Activated naive CD8-positive, alpha-beta T cell treated with anti-CD3 and anti-CD28 coated beads, Interleukin-2, amount 10 ng/mL, durations not matched to agents 7 days and 5 days (primary cell): ENCODE measurements at regions of chr6 and their contacts with region 1.

Region 1: GRCh38 chr6:34671801-34672656 is 24.5 kb downstream of the ILRUN start:
- DNase-seq: peak; percentile 59
- ATAC-seq: peak; percentile 99
- H3K4me3 Mint-ChIP-seq: peak overlapping the region; percentile 72
- H3K27ac Mint-ChIP-seq: peak overlapping the region; percentile 92
- H3K4me1 Mint-ChIP-seq: peaks cover 34% of the 10 kb centered on the region
- H3K27me3 Mint-ChIP-seq: no peaks in the 10 kb centered on the region

Region 2: GRCh38 chr6:32989396-32989795 is 1682.6 kb before region 1 on chr6:
- POLR2A ChIA-PET with region 1: no interaction called
- DNase-seq: no peak
- ATAC-seq: no peak
- H3K4me3 Mint-ChIP-seq: no peak overlapping the region
- H3K27ac Mint-ChIP-seq: no peak overlapping the region
- H3K4me1 Mint-ChIP-seq: peaks cover 19% of the 10 kb centered on the region
- H3K27me3 Mint-ChIP-seq: peaks cover 17% of the 10 kb centered on the region

Region 3: DNA sequence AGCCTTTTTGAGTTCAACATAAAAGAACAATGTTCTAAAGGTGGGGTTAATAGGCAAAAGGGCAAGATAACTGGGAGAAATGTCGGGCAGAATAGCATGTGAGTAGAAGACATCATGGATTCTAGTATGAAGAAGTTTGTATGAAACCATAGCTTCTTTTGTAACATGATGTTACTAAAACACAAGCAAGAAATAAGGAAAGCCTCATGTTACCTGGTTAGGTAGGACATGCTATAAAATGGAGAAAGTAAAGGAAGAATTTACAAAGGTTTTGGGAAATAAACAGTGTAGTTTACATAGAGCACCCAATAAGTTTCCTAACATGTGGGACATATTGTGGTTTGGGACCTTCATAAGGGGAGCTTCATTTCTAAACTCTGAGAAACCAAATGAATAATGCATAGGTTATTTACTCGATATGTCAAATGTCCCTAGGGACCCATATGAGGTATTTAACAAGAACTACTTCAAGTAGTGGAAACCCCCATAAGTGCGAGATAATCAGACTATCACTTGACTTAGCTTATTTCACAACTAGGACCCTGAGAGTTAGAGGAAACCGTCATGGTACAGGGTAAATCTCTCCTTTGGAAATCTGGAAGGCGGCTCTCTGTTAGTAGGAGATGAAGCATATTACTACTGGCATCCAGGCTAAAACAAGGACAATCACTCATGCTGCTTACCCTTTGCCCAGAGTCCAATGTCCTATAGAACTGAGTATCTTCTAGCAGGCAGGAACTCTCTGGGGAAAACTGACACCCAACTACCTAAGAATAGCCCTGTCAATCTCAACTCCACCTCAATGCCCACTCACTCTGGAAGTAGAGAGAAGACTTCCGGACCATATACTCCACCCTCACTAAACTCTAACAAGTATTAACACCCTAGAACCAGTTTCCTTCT is 32.9 kb before region 1 on chr6:
- POLR2A ChIA-PET with region 1: no interaction called
- DNase-seq: no peak
- ATAC-seq: no peak
- H3K4me3 Mint-ChIP-seq: no peak overlapping the region
- H3K27ac Mint-ChIP-seq: no peak overlapping the region
- H3K4me1 Mint-ChIP-seq: peaks cover 2% of the 10 kb centered on the region
- H3K27me3 Mint-ChIP-seq: no peaks in the 10 kb centered on the region

Region 4: GRCh38 chr6:34696739-34697543 is 24.9 kb after region 1 on chr6 and contains the start of gene ILRUN:
- POLR2A ChIA-PET with region 1: interaction called, 24 read pairs
- DNase-seq: peak; percentile 98
- ATAC-seq: peak; percentile 81
- H3K4me3 Mint-ChIP-seq: peak within 1 kb of the TSS; percentile 98
- H3K27ac Mint-ChIP-seq: peak within 1 kb of the TSS; percentile 99
- H3K4me1 Mint-ChIP-seq: peaks cover 30% of the 10 kb centered on the region
- H3K27me3 Mint-ChIP-seq: no peaks in the 10 kb centered on the region
- total RNA-seq, gene ILRUN: 66.1 to 73.8 TPM

Region 5: DNA sequence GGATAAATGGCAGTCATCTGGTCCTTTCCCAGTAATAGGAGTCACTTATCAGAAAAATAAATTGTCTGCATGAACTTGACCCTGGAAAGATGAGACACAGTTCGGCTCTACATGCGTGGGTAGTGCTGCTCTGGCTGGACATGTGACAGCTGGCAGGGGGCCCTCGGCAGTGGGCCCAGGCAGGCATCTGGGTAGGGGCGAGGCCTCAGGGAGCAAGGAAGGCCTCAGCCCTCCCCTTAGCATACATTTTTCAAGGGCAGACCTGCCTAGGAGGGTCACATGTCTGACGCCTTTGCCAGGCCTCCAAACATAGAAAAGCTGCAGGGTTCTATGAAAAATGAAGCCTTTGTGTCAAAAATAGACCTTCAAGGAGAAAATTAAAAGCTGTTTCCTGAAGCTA is 37.4 kb after region 1 on chr6:
- POLR2A ChIA-PET with region 1: no interaction called
- DNase-seq: no peak
- ATAC-seq: no peak
- H3K4me3 Mint-ChIP-seq: no peak overlapping the region
- H3K27ac Mint-ChIP-seq: no peak overlapping the region
- H3K4me1 Mint-ChIP-seq: peaks cover 3% of the 10 kb centered on the region
- H3K27me3 Mint-ChIP-seq: no peaks in the 10 kb centered on the region